GM10248 (cell line): ENCODE measurements at regions of chr15 and their contacts with region 1.

Region 1: GRCh38 chr15:69729161-69729748 is 276.6 kb downstream of the RPLP1 start:
- DNase-seq: peak; percentile 60
- CTCF ChIP-seq: peak; percentile 70

Region 2: GRCh38 chr15:69743091-69743490 is 13.8 kb after region 1 on chr15:
- CTCF ChIA-PET with region 1: interaction called, 10 read pairs
- POLR2A ChIA-PET with region 1: no interaction called
- DNase-seq: no peak
- CTCF ChIP-seq: no peak